Mammary epithelial cell (primary cell): ENCODE measurements at regions of chr1 and their contacts with region 1.

Region 1: GRCh38 chr1:28354121-28354520 is 15.4 kb upstream of the PHACTR4 start:
- DNase-seq: peak; percentile 71
- H3K4me3 ChIP-seq: no peak overlapping the region
- H3K27ac ChIP-seq: peak overlapping the region; percentile 41
- H3K4me1 ChIP-seq: peaks cover 26% of the 10 kb centered on the region
- H3K27me3 ChIP-seq: no peaks in the 10 kb centered on the region
- CTCF ChIP-seq: no peak

Region 2: DNA sequence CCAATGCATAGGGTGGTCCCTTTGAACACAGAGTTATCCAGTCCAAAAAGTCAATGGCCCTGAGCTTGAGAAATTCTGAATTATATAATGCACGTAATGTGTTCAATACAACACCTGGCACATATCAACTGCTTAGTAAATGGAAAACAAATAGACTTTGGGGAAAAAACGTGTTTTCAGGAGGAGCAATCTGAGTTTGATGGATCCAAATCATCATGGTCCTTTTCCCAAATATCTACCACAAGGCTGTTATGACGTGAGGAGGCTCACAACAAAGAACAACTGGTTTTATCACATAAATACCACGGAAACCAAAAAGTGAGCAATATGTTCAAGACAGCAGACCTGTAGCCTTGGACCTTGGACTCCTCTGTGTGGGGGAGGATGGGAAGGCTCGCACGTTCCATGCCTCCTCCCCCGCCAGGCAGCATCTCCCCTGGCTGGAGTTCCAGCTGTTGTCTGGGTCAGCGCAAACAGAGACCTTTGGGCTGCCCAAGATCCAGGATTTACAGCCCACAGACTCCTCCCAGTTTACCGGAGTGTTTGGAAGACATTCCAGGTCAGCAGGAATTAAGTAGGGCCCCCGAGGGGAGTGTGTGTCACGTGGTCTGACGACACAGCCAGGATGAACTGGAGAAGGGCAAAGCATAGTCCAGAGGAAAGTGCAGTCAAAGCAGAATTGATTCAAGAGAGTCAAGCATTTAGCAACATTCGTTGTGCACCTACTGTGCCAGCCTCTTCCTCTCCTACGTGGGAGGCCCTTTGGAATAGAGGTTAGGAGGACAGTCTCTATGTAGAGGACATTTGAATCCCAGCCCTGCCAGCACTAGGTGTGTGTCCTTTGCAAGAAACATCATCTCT is 57.5 kb before region 1 on chr1:
- CTCF ChIA-PET with region 1: no interaction called
- dilution Hi-C with region 1: no loop called
- in situ Hi-C with region 1: no loop called
- intact Hi-C with region 1: loop called (anchors 5 kb)
- DNase-seq: no peak
- H3K4me3 ChIP-seq: no peak overlapping the region
- H3K27ac ChIP-seq: no peak overlapping the region
- H3K4me1 ChIP-seq: peaks cover 6% of the 10 kb centered on the region
- H3K27me3 ChIP-seq: no peaks in the 10 kb centered on the region
- CTCF ChIP-seq: no peak

Region 3: GRCh38 chr1:28341591-28341990 is 12.5 kb before region 1 on chr1:
- CTCF ChIA-PET with region 1: interaction called, 7 read pairs
- dilution Hi-C with region 1: no loop called
- in situ Hi-C with region 1: no loop called
- intact Hi-C with region 1: loop called (anchors 1 kb)
- DNase-seq: peak; percentile 74
- H3K4me3 ChIP-seq: no peak overlapping the region
- H3K27ac ChIP-seq: peak overlapping the region; percentile 53
- H3K4me1 ChIP-seq: peaks cover 19% of the 10 kb centered on the region
- H3K27me3 ChIP-seq: no peaks in the 10 kb centered on the region
- CTCF ChIP-seq: no peak

Region 4: GRCh38 chr1:28417429-28417922 is 63.4 kb after region 1 on chr1:
- CTCF ChIA-PET with region 1: interaction called, 14 read pairs
- dilution Hi-C with region 1: no loop called
- in situ Hi-C with region 1: no loop called
- intact Hi-C with region 1: no loop called
- DNase-seq: peak; percentile 95
- H3K4me3 ChIP-seq: peak overlapping the region in 1 of 3 experiments; percentile 15
- H3K27ac ChIP-seq: peak overlapping the region; percentile 100
- H3K4me1 ChIP-seq: peaks cover 20% of the 10 kb centered on the region
- H3K27me3 ChIP-seq: no peaks in the 10 kb centered on the region
- CTCF ChIP-seq: no peak